ENCODE measurements at regions of chr3 and their contacts with region 1.

Region 1: GRCh38 chr3:59575113-59576001 is 525.5 kb upstream of the CFAP20DC start:
- DNase-seq: peak; percentile 60 to 68 (median 64)
- ATAC-seq: peak; percentile 89
- H3K4me3 ChIP-seq: no peak overlapping the region
- H3K27ac ChIP-seq: no peak overlapping the region
- H3K4me1 ChIP-seq: no peaks in the 10 kb centered on the region
- H3K27me3 ChIP-seq: no peaks in the 10 kb centered on the region
- CTCF ChIP-seq: peak; percentile 73 to 83 (median 76)
- EP300 ChIP-seq: no peak
- POLR2A ChIP-seq: no peak
- RAD21 ChIP-seq: peak; percentile 68 to 77

Region 2: DNA sequence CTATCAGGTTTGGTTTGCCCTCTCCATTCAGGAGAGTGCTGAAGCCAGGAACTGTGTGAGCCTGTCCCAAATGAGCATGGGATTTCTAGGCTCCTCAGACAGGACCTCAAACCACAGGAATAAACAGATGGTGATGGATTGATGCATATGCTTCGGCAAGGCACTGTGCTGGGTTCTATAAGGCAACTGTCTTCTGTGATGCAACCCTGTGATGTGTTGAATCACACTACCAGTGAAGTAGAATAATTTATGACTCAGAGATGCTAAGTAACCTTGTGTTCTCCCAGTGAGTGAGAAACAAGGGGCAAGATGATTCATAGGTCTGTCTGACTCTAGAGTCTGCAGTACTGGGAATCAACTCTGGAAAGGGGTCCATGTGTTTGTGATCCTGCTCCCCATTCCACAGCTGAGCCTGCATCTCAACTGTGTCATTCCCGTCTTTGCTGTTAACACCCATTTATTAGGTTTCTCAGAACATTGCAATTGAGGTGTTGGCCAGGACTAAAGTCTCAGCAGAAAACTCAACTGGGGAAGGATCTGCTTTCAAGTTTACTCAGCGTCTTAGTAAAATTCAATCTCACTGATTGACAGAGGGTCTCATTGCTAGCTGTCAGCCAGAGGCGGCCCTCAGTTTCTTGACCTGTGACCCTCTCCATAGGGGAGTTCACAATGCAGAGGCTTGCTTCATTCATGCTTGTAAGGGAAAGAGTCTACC is 15.5 kb before region 1 on chr3:
- CTCF ChIA-PET with region 1: no interaction called
- POLR2A ChIA-PET with region 1: no interaction called
- in situ Hi-C with region 1: no loop called
- intact Hi-C with region 1: no loop called
- DNase-seq: no peak
- ATAC-seq: no peak
- H3K4me3 ChIP-seq: no peak overlapping the region
- H3K27ac ChIP-seq: no peak overlapping the region
- H3K4me1 ChIP-seq: no peaks in the 10 kb centered on the region
- H3K27me3 ChIP-seq: no peaks in the 10 kb centered on the region
- CTCF ChIP-seq: no peak
- EP300 ChIP-seq: no peak
- POLR2A ChIP-seq: no peak
- RAD21 ChIP-seq: no peak

Region 3: GRCh38 chr3:59857589-59858346 is 282.4 kb after region 1 on chr3:
- CTCF ChIA-PET with region 1: interaction called, 5 read pairs
- POLR2A ChIA-PET with region 1: no interaction called
- in situ Hi-C with region 1: loop called (anchors 25 kb)
- intact Hi-C with region 1: loop called (anchors 2 kb)
- DNase-seq: peak; percentile 29 to 62 (median 42)
- ATAC-seq: peak; percentile 86
- H3K4me3 ChIP-seq: no peak overlapping the region
- H3K27ac ChIP-seq: no peak overlapping the region
- H3K4me1 ChIP-seq: no peaks in the 10 kb centered on the region
- H3K27me3 ChIP-seq: no peaks in the 10 kb centered on the region
- CTCF ChIP-seq: peak; percentile 60 to 78 (median 71)
- EP300 ChIP-seq: no peak
- POLR2A ChIP-seq: no peak
- RAD21 ChIP-seq: peak; percentile 32 to 58; a peak in 3 of 4 replicates

Region 4: GRCh38 chr3:60431599-60431958 is 856.2 kb after region 1 on chr3:
- CTCF ChIA-PET with region 1: no interaction called
- POLR2A ChIA-PET with region 1: no interaction called
- in situ Hi-C with region 1: no loop called
- intact Hi-C with region 1: loop called (anchors 10 kb)
- DNase-seq: peak; percentile 5 to 71 (median 16)
- ATAC-seq: peak; percentile 97
- H3K4me3 ChIP-seq: no peak overlapping the region
- H3K27ac ChIP-seq: peak overlapping the region; percentile 40; the same call in 1 of the 3 replicates
- H3K4me1 ChIP-seq: peaks cover 0 to 11% of the 10 kb centered on the region in 2 experiments; a peak in 4 of 5 replicates
- H3K27me3 ChIP-seq: no peaks in the 10 kb centered on the region
- CTCF ChIP-seq: peak; percentile 45 to 60 (median 50); a peak in 5 of 6 replicates
- EP300 ChIP-seq: no peak
- POLR2A ChIP-seq: no peak
- RAD21 ChIP-seq: peak; percentile 41

Region 5: GRCh38 chr3:61381745-61382392 is 1806.5 kb after region 1 on chr3:
- CTCF ChIA-PET with region 1: no interaction called
- POLR2A ChIA-PET with region 1: no interaction called
- in situ Hi-C with region 1: loop called (anchors 25 kb)
- intact Hi-C with region 1: loop called (anchors 10 kb)
- DNase-seq: peak; percentile 17 to 34 (median 22)
- ATAC-seq: peak; percentile 81
- H3K4me3 ChIP-seq: no peak overlapping the region
- H3K27ac ChIP-seq: no peak overlapping the region
- H3K4me1 ChIP-seq: no peaks in the 10 kb centered on the region
- H3K27me3 ChIP-seq: no peaks in the 10 kb centered on the region
- CTCF ChIP-seq: peak; percentile 14 to 61 (median 56); a peak in 5 of 6 replicates
- EP300 ChIP-seq: no peak
- POLR2A ChIP-seq: no peak
- RAD21 ChIP-seq: peak; percentile 57 to 66

Measured in K562 (cell line).